ENCODE measurements at regions of chr5 and their contacts with region 1.

Region 1: GRCh38 chr5:59789197-59789596 is 104.3 kb downstream of the PDE4D start:
- DNase-seq: no peak
- H3K4me3 ChIP-seq: no peak overlapping the region
- H3K27ac ChIP-seq: no peak overlapping the region
- H3K4me1 ChIP-seq: peaks cover 0 to 4% (median 1%) of the 10 kb centered on the region in 4 experiments; a peak in 3 of 7 replicates
- H3K27me3 ChIP-seq: no peaks in the 10 kb centered on the region
- CTCF ChIP-seq: no peak
- EP300 ChIP-seq: no peak
- POLR2A ChIP-seq: no peak
- RAD21 ChIP-seq: no peak

Region 2: GRCh38 chr5:59698207-59699178 is 90.7 kb before region 1 on chr5:
- CTCF ChIA-PET with region 1: no interaction called
- POLR2A ChIA-PET with region 1: no interaction called
- DNase-seq: no peak
- H3K4me3 ChIP-seq: no peak overlapping the region
- H3K27ac ChIP-seq: no peak overlapping the region
- H3K4me1 ChIP-seq: no peaks in the 10 kb centered on the region
- H3K27me3 ChIP-seq: no peaks in the 10 kb centered on the region
- CTCF ChIP-seq: no peak
- EP300 ChIP-seq: no peak
- POLR2A ChIP-seq: no peak
- RAD21 ChIP-seq: no peak

Region 3: DNA sequence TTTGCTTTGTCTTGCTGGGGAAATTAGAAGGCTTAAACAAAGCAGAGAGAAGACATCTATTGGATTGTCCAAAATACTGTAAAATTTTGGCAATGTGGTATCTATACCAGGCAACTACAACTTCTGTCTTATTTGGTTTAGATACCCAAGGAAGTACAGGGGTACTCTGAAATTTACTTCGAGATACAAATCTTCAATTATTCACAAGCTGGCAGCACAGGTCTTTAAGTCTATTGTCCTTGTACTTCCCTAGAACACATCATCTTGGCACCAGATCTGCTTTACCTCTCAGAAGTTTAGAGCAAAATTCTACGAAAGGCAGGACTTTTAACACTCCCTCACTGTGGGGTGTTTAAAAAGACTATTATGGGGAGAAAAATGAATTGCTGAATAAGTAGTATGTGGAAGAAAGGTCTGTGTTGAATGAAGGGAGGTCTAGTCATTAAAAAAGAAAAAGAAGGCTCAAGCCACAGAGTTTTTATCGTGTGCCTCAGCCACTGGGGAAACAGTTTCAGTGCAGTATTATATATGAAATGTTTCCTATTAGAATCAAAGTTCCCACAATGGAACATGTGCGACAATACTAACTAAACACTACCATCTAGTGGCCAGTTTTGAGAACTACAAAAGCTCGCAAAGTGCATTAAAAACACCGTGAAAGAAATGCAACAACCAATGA is 10.6 kb after region 1 on chr5:
- CTCF ChIA-PET with region 1: interaction called, 15 read pairs
- POLR2A ChIA-PET with region 1: no interaction called
- DNase-seq: no peak
- H3K4me3 ChIP-seq: peak overlapping the region in 2 of 4 experiments; percentile 9 to 38; a peak in 1 of 8 replicates
- H3K27ac ChIP-seq: no peak overlapping the region
- H3K4me1 ChIP-seq: peaks cover 0 to 8% (median 0%) of the 10 kb centered on the region in 4 experiments; a peak in 2 of 7 replicates
- H3K27me3 ChIP-seq: no peaks in the 10 kb centered on the region
- CTCF ChIP-seq: peak in 2 of 3 experiments; percentile 52 to 59; a peak in 2 of 4 replicates
- EP300 ChIP-seq: no peak
- POLR2A ChIP-seq: no peak
- RAD21 ChIP-seq: peak; percentile 86 to 90

Measured in H1 (cell line).